ENCODE measurements at regions of chr7 and their contacts with region 1.

Region 1: GRCh38 chr7:139777948-139778841 is at the start of gene HIPK2:
- DNase-seq: peak; percentile 92
- H3K4me3 Mint-ChIP-seq: peak within 1 kb of the TSS; percentile 99
- H3K27ac Mint-ChIP-seq: peak within 1 kb of the TSS; percentile 99
- H3K4me1 Mint-ChIP-seq: peaks cover 50% of the 10 kb centered on the region
- H3K27me3 Mint-ChIP-seq: peaks cover 20% of the 10 kb centered on the region
- total RNA-seq, gene HIPK2: 23.9 and 26.1 TPM in 2 replicates

Region 2: GRCh38 chr7:139340037-139340807 is 438.0 kb before region 1 on chr7:
- intact Hi-C with region 1: loop called (anchors 2 kb)
- DNase-seq: peak; percentile 99
- H3K4me3 Mint-ChIP-seq: peak overlapping the region; percentile 91
- H3K27ac Mint-ChIP-seq: peak overlapping the region; percentile 93
- H3K4me1 Mint-ChIP-seq: peaks cover 19% of the 10 kb centered on the region
- H3K27me3 Mint-ChIP-seq: peaks cover 4% of the 10 kb centered on the region

Region 3: GRCh38 chr7:139645572-139646523 is 132.3 kb before region 1 on chr7:
- intact Hi-C with region 1: loop called (anchors 1 kb)
- DNase-seq: peak; percentile 94
- H3K4me3 Mint-ChIP-seq: no peak overlapping the region
- H3K27ac Mint-ChIP-seq: no peak overlapping the region
- H3K4me1 Mint-ChIP-seq: peaks cover 51% of the 10 kb centered on the region
- H3K27me3 Mint-ChIP-seq: no peaks in the 10 kb centered on the region

Region 4: DNA sequence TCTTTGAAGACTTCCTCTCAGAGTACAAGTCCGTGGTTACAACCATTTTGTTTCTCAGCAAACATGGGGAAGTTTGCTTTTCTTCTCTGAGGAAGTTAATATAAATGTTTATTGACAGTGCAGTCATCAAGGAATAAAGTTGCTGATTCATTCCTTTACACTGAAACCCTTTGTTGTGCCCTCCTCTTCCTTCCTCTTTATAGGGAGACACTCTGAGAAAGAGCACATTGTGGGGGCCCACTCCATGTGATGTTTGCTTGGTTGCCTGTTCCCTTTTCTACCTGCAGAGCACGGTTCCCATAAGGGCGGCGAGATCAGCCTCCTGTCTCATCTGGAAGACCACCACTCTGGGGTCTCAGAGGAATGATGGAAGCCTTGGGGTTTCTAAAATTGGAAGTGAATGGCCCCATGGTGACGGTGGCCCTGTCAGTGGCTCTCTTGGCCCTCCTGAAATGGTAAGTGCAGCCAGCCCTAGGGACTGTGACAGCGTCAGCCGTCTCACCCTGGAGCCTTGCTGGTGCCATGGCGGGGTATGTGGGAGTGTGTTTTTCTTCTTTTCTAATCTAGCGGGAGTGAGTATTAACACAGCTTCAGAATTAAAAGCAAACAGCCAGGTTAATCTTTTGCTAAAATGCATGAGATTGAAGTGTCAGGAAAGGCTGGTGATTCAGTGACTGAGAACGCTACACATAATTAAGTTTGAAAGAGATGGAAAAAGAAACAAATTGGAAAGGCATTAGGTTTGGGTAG is 51.0 kb after region 1 on chr7 and contains the start of gene TBXAS1:
- intact Hi-C with region 1: loop called (anchors 5 kb)
- DNase-seq: no peak
- H3K4me3 Mint-ChIP-seq: peak within 1 kb of the TSS; percentile 57
- H3K27ac Mint-ChIP-seq: peak within 1 kb of the TSS; percentile 75
- H3K4me1 Mint-ChIP-seq: peaks cover 22% of the 10 kb centered on the region
- H3K27me3 Mint-ChIP-seq: peaks cover 11% of the 10 kb centered on the region
- total RNA-seq, gene TBXAS1: 1.8 and 3.5 TPM in 2 replicates

Region 5: DNA sequence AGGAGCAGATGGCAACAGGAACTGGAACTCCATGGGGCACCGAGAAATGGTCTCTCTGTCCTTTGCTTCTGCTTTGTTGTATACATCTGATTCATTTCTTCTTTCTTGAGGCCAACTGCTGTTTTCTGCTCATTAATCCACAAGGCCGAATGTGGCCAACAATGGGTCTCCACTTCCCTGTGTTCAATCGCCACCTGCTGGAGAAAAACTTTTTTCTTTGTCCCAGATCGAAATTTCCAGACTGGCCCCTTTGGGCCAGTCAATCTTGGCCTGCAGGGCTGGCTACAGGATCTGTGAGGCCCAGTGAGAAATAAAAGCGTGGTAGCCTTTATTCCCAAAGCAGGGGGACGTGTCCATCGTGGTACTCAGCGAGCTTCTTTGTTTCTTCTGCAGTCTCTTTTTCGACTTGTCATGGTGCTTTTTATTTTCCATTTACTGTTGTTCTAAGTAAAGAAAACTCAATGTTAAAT is 225.8 kb after region 1 on chr7:
- intact Hi-C with region 1: loop called (anchors 1 kb)
- DNase-seq: peak; percentile 82
- H3K4me3 Mint-ChIP-seq: no peak overlapping the region
- H3K27ac Mint-ChIP-seq: no peak overlapping the region
- H3K4me1 Mint-ChIP-seq: peaks cover 4% of the 10 kb centered on the region
- H3K27me3 Mint-ChIP-seq: peaks cover 2% of the 10 kb centered on the region

Measured in activated CD4-positive, alpha-beta T cell treated with anti-CD3 and anti-CD28 coated beads, Interleukin-2, amount 10 ng/mL, durations not matched to agents 24 days and 14 days (primary cell).